Activated naive CD4-positive, alpha-beta T cell treated with anti-CD3 and anti-CD28 coated beads for 36 hours (primary cell): ENCODE measurements at regions of chr3 and their contacts with region 1.

Region 1: GRCh38 chr3:50088725-50089608 is at the start of gene RBM5:
- DNase-seq: peak; percentile 97
- H3K4me3 Mint-ChIP-seq: peak within 1 kb of the TSS; percentile 83
- H3K27ac Mint-ChIP-seq: peak within 1 kb of the TSS; percentile 88
- H3K4me1 Mint-ChIP-seq: peaks cover 26% of the 10 kb centered on the region
- H3K27me3 Mint-ChIP-seq: no peaks in the 10 kb centered on the region
- total RNA-seq, gene RBM5: 124 to 129 TPM

Region 2: GRCh38 chr3:49512771-49513358 is 576.1 kb before region 1 on chr3:
- CTCF ChIA-PET with region 1: no interaction called
- intact Hi-C with region 1: no loop called
- DNase-seq: no peak
- H3K4me3 Mint-ChIP-seq: no peak overlapping the region
- H3K27ac Mint-ChIP-seq: no peak overlapping the region
- H3K4me1 Mint-ChIP-seq: no peaks in the 10 kb centered on the region
- H3K27me3 Mint-ChIP-seq: no peaks in the 10 kb centered on the region

Region 3: DNA sequence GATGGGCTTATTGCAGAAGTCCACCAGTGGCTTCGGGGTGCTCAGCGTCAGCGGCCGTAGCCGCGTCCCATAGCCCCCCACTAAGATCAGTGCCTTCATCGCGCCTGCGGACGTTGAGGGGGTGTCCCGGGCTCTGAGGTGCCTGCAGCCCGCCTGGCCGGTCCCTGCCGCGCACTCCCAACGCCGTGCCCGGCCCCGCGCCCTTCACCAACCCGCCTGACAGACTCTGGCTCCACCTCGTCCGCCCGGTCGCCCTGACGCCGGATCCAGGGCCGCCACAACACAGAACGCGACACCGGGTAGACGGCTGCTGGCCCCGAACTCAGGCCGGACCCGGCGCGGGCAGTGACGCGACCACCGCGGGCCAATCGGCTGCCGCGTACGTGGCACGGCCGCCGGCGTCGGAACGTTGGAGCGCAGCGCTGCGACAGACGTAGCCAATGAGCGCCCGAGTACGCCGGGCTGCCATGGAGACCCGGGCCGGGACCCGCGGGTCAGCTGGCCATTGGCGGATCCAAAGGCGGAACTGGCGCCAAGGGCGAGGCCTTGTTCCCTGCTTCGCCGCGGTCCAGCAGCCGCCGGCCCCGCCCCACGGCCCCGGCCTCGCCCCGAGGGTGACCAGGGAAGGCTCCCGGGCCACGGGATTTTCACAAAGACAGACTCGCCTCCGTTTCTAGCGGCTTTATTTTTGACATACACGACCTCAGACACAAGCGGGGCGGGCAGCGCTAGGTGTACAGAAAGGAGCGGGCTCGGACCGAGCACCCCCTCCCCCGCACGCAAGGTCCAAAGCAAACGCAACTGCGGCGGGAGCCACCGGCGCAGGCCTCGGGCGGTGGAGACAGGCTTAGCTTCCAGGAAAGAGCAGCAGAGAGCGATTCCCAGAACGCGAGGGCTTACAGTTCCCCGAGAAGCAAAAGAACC is 365.1 kb before region 1 on chr3 and contains the start of gene GMPPB:
- CTCF ChIA-PET with region 1: no interaction called
- intact Hi-C with region 1: loop called (anchors 5 kb)
- DNase-seq: peak; percentile 96
- H3K4me3 Mint-ChIP-seq: peak within 1 kb of the TSS; percentile 96
- H3K27ac Mint-ChIP-seq: peak within 1 kb of the TSS; percentile 95
- H3K4me1 Mint-ChIP-seq: peaks cover 33% of the 10 kb centered on the region
- H3K27me3 Mint-ChIP-seq: no peaks in the 10 kb centered on the region
- total RNA-seq, gene GMPPB: 25.6 to 27.4 TPM

Region 4: DNA sequence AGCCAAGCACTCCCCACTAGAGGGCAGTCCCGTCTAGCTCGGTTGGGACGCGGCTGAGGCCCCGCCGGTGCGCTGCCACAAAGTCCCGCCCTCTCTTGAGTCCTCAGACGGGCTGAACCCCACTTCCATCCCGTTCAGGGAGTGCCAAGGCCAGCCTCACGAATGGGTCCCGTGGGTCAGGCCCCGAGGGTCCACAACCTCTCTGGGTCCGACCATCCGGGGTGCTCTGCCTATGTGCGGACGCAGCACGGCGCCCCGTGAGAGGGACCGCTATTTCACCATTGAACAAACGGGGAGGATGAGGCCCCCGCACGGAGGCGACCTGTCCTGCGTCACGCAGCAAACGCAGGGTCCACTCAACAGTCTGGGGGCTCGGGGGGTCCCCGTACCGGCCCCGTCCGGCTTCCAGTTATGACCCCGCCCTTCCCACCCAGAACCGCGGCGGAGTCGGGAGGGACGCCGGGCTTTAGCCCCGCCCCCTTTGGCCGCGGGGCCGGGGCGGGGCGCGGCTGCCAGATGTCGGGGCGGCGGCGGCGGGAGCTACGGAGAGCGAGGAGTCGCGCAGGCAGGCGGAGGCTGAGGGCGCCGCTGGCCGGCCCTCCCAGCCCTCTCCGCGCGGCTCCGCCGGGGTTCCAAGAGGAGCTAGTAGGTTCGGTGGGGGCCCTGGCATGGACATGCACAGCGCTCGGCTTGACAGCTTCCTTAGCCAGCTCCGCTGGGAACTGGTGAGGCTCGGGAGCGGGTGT is 286.1 kb before region 1 on chr3 and contains the start of gene INKA1:
- CTCF ChIA-PET with region 1: interaction called, 8 read pairs
- intact Hi-C with region 1: loop called (anchors 2 kb)
- DNase-seq: peak; percentile 93
- H3K4me3 Mint-ChIP-seq: peak within 1 kb of the TSS; percentile 82
- H3K27ac Mint-ChIP-seq: peak within 1 kb of the TSS; percentile 54
- H3K4me1 Mint-ChIP-seq: peaks cover 41% of the 10 kb centered on the region
- H3K27me3 Mint-ChIP-seq: peaks cover 2% of the 10 kb centered on the region
- total RNA-seq, gene INKA1: 0.33 to 0.37 TPM

Region 5: DNA sequence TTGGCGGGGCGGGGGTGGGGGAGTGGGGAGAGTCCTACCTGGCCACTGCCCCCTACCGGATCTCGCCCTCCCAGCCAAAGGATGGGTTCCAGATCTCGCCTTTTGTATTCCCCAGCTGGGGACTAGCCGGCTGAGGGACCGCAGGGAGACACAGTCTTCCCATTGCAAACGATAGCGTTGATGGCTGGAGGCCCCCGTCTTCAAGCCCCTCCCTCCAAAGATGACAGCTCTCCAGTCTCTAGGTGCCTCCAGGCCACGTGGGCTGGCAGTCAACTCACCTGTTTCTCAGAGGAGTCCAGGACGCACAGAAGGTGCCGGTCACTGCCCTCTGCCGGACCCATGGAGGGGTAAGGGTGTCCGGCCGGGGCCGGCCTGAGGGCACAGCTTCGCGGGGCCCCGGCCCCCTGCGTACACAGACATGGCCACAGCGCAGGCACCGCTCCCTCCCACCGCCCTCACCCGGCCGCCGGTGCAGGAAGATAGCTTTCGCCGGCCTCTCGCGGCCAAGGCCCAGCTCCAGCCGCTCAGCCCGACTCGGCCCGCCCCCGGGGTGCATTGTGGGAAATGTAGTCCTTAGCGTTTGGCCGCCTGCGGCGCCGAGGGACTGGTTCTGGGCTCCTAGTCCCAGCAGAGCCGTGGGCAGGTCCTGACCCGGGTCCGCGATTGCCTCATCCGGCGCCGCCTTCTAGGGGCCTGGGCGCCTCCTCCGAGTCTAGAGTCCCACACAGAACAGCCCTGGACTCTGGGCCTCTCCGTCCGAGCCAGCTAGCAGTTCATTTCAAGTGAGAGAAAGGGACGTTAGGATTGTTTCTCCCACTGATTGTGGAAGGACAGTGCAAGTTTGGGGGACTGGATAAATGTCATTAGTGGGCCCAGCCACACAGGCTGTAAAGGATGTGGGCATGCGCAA is 159.4 kb before region 1 on chr3 and contains the start of gene MON1A:
- CTCF ChIA-PET with region 1: no interaction called
- intact Hi-C with region 1: loop called (anchors 2 kb)
- DNase-seq: peak; percentile 89
- H3K4me3 Mint-ChIP-seq: peak within 1 kb of the TSS; percentile 81
- H3K27ac Mint-ChIP-seq: peak within 1 kb of the TSS; percentile 70
- H3K4me1 Mint-ChIP-seq: peaks cover 32% of the 10 kb centered on the region
- H3K27me3 Mint-ChIP-seq: no peaks in the 10 kb centered on the region
- total RNA-seq, gene MON1A: 5.4 to 5.9 TPM

Region 6: DNA sequence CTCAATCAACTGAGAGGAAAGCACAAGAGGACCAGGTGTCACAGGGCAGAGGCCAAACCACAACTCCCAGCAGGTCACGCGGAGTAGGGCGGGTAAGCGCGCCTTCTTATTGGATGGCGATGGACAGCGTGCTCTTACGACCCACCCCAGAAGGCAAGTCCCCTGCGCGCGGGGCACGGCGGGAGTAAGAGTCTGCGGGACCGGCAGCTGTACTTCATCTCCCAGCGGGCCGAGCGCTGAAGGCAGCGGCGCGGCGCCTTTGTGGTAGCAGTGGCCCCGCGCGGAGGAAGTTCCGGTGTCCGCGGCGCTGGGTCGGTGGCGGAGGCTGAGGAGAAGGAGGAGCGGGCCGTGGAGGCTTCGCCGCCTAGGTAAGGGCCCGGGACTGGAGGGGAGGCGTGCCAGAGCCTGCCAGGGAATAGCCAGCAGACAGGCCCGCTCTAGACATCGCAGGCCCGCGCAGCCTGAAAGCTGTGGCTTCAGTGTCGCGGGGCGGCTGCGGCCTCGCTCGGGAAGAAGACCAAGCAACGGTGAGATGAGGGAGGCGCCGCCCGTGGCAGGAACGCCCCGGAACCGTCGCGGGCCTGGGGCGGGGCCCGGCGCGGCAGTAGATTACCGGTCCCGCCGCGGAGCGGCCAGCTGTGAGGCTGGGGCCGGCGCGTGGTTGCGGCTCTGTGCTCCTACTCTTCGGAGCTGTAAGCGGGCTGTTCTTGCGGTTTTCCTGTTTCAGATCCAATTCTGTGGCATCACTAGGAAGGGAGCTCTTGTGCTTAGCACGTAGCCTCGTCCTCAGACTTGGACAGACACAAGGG is 148.9 kb before region 1 on chr3 and contains the start of gene RBM6:
- CTCF ChIA-PET with region 1: interaction called, 3 read pairs
- intact Hi-C with region 1: loop called (anchors 1 kb)
- DNase-seq: peak; percentile 98
- H3K4me3 Mint-ChIP-seq: peak within 1 kb of the TSS; percentile 98
- H3K27ac Mint-ChIP-seq: peak within 1 kb of the TSS; percentile 93
- H3K4me1 Mint-ChIP-seq: peaks cover 29% of the 10 kb centered on the region
- H3K27me3 Mint-ChIP-seq: no peaks in the 10 kb centered on the region
- total RNA-seq, gene RBM6: 89.1 to 98.2 TPM

Region 7: GRCh38 chr3:50235716-50236496 is 146.9 kb after region 1 on chr3 and contains the start of gene GNAI2:
- CTCF ChIA-PET with region 1: no interaction called
- intact Hi-C with region 1: loop called (anchors 1 kb)
- DNase-seq: peak; percentile 99
- H3K4me3 Mint-ChIP-seq: peak within 1 kb of the TSS; percentile 95
- H3K27ac Mint-ChIP-seq: peak within 1 kb of the TSS; percentile 92
- H3K4me1 Mint-ChIP-seq: peaks cover 33% of the 10 kb centered on the region
- H3K27me3 Mint-ChIP-seq: no peaks in the 10 kb centered on the region
- total RNA-seq, gene GNAI2: 272 to 276 TPM

Region 8: DNA sequence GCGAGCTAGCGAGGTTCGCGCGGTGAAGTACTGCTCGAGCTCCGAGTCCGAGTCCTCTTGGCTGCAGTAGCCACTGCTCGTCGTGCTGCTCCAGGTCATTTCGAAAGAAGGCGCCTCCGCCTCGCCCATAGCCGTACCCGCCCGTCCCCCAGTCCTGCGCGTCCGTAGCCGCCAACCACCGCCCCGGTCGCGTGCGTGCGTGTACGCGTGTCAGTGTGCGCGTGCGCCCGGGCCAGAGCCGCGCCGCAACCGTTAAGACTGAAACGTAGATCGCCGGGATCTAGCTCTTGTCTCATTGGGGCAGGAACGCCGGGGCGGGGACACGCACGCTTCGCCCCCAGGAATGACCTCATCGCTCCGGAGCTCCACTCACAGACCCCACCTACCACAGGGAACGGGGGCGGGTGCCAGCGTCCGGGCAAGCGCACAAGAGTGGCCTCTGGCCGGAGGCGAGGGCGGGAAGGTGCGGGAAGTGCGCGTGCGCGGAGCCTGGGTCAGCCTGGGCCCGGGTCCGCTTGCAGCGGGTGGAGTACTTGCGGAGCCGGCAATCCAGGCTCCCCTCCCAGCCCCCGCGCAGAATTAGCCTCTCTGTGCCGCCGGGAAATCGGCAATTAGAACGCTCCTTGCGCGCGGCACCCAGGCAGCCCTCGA is 248.3 kb after region 1 on chr3:
- CTCF ChIA-PET with region 1: no interaction called
- intact Hi-C with region 1: loop called (anchors 5 kb)
- DNase-seq: peak; percentile 99
- H3K4me3 Mint-ChIP-seq: peak overlapping the region; percentile 94
- H3K27ac Mint-ChIP-seq: peak overlapping the region; percentile 94
- H3K4me1 Mint-ChIP-seq: peaks cover 57% of the 10 kb centered on the region
- H3K27me3 Mint-ChIP-seq: no peaks in the 10 kb centered on the region